ENCODE measurements at regions of chr10 and their contacts with region 1.

Region 1: GRCh38 chr10:119207367-119207668 is at the start of gene GRK5:
- DNase-seq: peak; percentile 95
- H3K4me3 ChIP-seq: peak within 1 kb of the TSS; percentile 68 to 90 (median 74)
- H3K27ac ChIP-seq: peak within 1 kb of the TSS; percentile 92
- H3K4me1 ChIP-seq: peaks cover 61% of the 10 kb centered on the region
- H3K27me3 ChIP-seq: no peaks in the 10 kb centered on the region
- CTCF ChIP-seq: no peak
- POLR2A ChIP-seq: no peak
- total RNA-seq, gene GRK5: 29.1 and 29.5 TPM in 2 replicates

Region 2: DNA sequence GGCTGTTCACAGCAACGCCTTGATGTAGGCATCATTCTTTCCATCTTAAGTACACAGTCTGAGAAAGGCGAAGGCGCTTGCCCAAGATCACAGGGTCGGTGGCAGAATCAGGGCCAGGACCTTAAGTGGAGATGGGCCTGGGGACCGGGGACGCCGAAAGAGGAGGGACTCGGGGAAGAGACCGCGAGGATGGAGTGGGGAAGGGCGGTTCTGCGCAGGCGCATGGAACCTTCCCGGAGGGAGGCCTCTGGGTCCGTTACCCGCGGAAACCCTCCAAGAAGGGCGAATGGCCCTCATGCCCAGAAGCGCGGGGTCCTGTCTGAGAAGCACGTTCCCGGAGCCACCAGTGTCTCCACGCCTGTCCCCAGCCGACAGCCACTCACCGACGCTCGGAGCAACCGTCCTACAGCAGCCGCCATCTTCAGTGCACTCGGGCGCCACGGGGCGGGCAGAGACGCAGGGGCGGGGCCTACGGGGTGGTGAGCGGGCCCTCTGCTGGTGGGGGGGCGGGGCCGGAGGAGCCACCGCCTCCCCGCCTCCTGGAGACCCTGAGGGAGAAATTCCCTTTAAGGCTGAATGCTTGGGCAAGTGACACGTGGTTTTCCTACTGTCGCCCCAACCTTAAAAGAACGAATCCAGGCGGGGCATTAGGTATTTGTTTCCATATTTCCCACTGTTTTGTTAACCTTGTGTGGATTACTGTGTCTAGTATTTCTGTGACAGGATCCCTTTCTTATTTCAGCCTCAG is 28.8 kb before region 1 on chr10 and contains the start of gene PRDX3:
- CTCF ChIA-PET with region 1: interaction called, 4 read pairs
- POLR2A ChIA-PET with region 1: interaction called, 3 read pairs
- dilution Hi-C with region 1: no loop called
- intact Hi-C with region 1: loop called (anchors 1 kb)
- DNase-seq: peak; percentile 94
- H3K4me3 ChIP-seq: peak within 1 kb of the TSS; percentile 85 to 91 (median 87)
- H3K27ac ChIP-seq: peak within 1 kb of the TSS; percentile 83
- H3K4me1 ChIP-seq: peaks cover 12% of the 10 kb centered on the region
- H3K27me3 ChIP-seq: no peaks in the 10 kb centered on the region
- CTCF ChIP-seq: peak in 1 of 2 donors; percentile 22
- POLR2A ChIP-seq: peak; percentile 99
- total RNA-seq, gene PRDX3: 117 and 124 TPM in 2 replicates

Region 3: DNA sequence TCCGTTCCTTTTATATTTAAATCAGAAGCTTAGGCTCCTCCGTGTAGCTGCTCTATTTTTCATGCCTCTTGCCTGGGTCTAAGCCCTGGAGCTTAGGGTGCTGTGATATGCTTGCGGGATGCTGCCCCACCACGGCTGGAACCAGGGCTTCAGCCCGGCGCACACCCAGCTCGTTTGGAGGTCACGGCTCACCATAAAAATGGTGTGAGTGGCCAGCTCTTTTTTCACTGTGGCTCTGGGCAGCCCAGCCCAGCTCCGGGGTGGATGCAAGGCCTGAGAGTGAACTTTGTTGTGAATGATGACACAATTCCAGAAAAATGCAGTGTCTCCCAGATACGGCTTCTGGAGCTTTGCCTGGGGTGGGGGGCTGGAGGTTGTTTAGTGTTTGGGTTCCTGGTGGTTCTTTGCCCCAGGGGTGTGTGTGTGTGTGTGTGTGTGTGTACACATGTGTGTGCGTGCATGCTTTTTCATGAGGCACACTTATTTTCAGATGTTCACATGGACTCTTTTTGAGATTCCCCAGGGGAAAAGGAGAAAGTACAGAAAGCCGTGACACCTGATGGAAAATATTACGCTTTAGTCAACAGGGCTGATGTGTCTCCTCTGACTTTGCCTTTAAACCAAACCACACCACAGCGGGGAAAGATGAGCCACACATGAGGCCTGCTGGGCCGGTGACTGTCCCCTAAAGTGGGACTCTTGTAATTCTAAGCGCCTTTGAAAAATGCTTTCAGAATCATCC is 46.3 kb after region 1 on chr10:
- CTCF ChIA-PET with region 1: interaction called, 24 read pairs
- POLR2A ChIA-PET with region 1: no interaction called
- dilution Hi-C with region 1: no loop called
- intact Hi-C with region 1: no loop called
- DNase-seq: peak; percentile 73
- H3K4me3 ChIP-seq: no peak overlapping the region
- H3K27ac ChIP-seq: peak overlapping the region; percentile 35
- H3K4me1 ChIP-seq: peaks cover 46% of the 10 kb centered on the region
- H3K27me3 ChIP-seq: no peaks in the 10 kb centered on the region
- CTCF ChIP-seq: no peak
- POLR2A ChIP-seq: no peak

Region 4: GRCh38 chr10:119305860-119306513 is 98.7 kb after region 1 on chr10:
- CTCF ChIA-PET with region 1: interaction called, 15 read pairs
- POLR2A ChIA-PET with region 1: interaction called, 3 read pairs
- dilution Hi-C with region 1: no loop called
- intact Hi-C with region 1: loop called (anchors 1 kb)
- DNase-seq: peak; percentile 99
- H3K4me3 ChIP-seq: no peak overlapping the region
- H3K27ac ChIP-seq: peak overlapping the region; percentile 93
- H3K4me1 ChIP-seq: peaks cover 49% of the 10 kb centered on the region
- H3K27me3 ChIP-seq: no peaks in the 10 kb centered on the region
- CTCF ChIP-seq: no peak
- POLR2A ChIP-seq: peak; percentile 29

Region 5: GRCh38 chr10:119370111-119370741 is 162.9 kb after region 1 on chr10:
- CTCF ChIA-PET with region 1: interaction called, 22 read pairs
- POLR2A ChIA-PET with region 1: no interaction called
- dilution Hi-C with region 1: no loop called
- intact Hi-C with region 1: loop called (anchors 1 kb)
- DNase-seq: peak; percentile 92
- H3K4me3 ChIP-seq: peak overlapping the region in 2 of 3 experiments; percentile 11 to 68
- H3K27ac ChIP-seq: peak overlapping the region; percentile 98
- H3K4me1 ChIP-seq: peaks cover 43% of the 10 kb centered on the region
- H3K27me3 ChIP-seq: no peaks in the 10 kb centered on the region
- CTCF ChIP-seq: no peak
- POLR2A ChIP-seq: no peak

Region 6: GRCh38 chr10:119445311-119445934 is 238.1 kb after region 1 on chr10:
- CTCF ChIA-PET with region 1: interaction called, 245 read pairs
- POLR2A ChIA-PET with region 1: interaction called, 4 read pairs
- dilution Hi-C with region 1: no loop called
- intact Hi-C with region 1: loop called (anchors 1 kb)
- DNase-seq: peak; percentile 57
- H3K4me3 ChIP-seq: no peak overlapping the region
- H3K27ac ChIP-seq: no peak overlapping the region
- H3K4me1 ChIP-seq: no peaks in the 10 kb centered on the region
- H3K27me3 ChIP-seq: no peaks in the 10 kb centered on the region
- CTCF ChIP-seq: peak; percentile 78 to 96
- POLR2A ChIP-seq: no peak

Region 7: GRCh38 chr10:119650692-119651513 is 443.6 kb after region 1 on chr10 and contains the start of gene BAG3:
- CTCF ChIA-PET with region 1: no interaction called
- POLR2A ChIA-PET with region 1: no interaction called
- dilution Hi-C with region 1: no loop called
- intact Hi-C with region 1: loop called (anchors 10 kb)
- DNase-seq: peak; percentile 84
- H3K4me3 ChIP-seq: peak within 1 kb of the TSS; percentile 86 to 97 (median 93)
- H3K27ac ChIP-seq: peak within 1 kb of the TSS; percentile 56
- H3K4me1 ChIP-seq: peaks cover 34% of the 10 kb centered on the region
- H3K27me3 ChIP-seq: no peaks in the 10 kb centered on the region
- CTCF ChIP-seq: no peak
- POLR2A ChIP-seq: peak; percentile 99
- total RNA-seq, gene BAG3: 65.4 and 66.7 TPM in 2 replicates